ENCODE measurements at regions of chr2 and their contacts with region 1.

Region 1: GRCh38 chr2:218395797-218396687 is 3.6 kb upstream of the CTDSP1 start:
- DNase-seq: peak; percentile 89 to 95 (median 91)
- H3K4me3 ChIP-seq: peak overlapping the region; percentile 54 to 92 (median 85)
- H3K4me3 Mint-ChIP-seq: peak overlapping the region; percentile 88 to 94
- H3K27ac ChIP-seq: peak overlapping the region; percentile 90 to 91
- H3K27ac Mint-ChIP-seq: peak overlapping the region; percentile 97 to 98 (median 97)
- H3K4me1 ChIP-seq: peaks cover 65 to 84% of the 10 kb centered on the region in 2 donors
- H3K4me1 Mint-ChIP-seq: peaks cover 61% of the 10 kb centered on the region
- H3K27me3 ChIP-seq: no peaks in the 10 kb centered on the region
- H3K27me3 Mint-ChIP-seq: peaks cover 0 to 7% (median 0%) of the 10 kb centered on the region in 3 donors
- CTCF ChIP-seq: peak; percentile 89

Region 2: GRCh38 chr2:218216674-218217359 is 179.2 kb before region 1 on chr2 and contains the start of gene ARPC2:
- intact Hi-C with region 1: loop called in 1 of 2 experiments (anchors 5 kb)
- DNase-seq: peak; percentile 94
- H3K4me3 ChIP-seq: peak within 1 kb of the TSS; percentile 78 to 99 (median 99)
- H3K4me3 Mint-ChIP-seq: peak within 1 kb of the TSS; percentile 91 to 95
- H3K27ac ChIP-seq: peak within 1 kb of the TSS; percentile 88 to 97
- H3K27ac Mint-ChIP-seq: peak within 1 kb of the TSS; percentile 96 to 100 (median 99)
- H3K4me1 ChIP-seq: peaks cover 50 to 60% of the 10 kb centered on the region in 2 donors
- H3K4me1 Mint-ChIP-seq: peaks cover 50% of the 10 kb centered on the region
- H3K27me3 ChIP-seq: no peaks in the 10 kb centered on the region
- H3K27me3 Mint-ChIP-seq: no peaks in the 10 kb centered on the region
- CTCF ChIP-seq: no peak
- polyA plus RNA-seq, gene ARPC2: 640 to 1,227 (median 1,162) TPM

Region 3: DNA sequence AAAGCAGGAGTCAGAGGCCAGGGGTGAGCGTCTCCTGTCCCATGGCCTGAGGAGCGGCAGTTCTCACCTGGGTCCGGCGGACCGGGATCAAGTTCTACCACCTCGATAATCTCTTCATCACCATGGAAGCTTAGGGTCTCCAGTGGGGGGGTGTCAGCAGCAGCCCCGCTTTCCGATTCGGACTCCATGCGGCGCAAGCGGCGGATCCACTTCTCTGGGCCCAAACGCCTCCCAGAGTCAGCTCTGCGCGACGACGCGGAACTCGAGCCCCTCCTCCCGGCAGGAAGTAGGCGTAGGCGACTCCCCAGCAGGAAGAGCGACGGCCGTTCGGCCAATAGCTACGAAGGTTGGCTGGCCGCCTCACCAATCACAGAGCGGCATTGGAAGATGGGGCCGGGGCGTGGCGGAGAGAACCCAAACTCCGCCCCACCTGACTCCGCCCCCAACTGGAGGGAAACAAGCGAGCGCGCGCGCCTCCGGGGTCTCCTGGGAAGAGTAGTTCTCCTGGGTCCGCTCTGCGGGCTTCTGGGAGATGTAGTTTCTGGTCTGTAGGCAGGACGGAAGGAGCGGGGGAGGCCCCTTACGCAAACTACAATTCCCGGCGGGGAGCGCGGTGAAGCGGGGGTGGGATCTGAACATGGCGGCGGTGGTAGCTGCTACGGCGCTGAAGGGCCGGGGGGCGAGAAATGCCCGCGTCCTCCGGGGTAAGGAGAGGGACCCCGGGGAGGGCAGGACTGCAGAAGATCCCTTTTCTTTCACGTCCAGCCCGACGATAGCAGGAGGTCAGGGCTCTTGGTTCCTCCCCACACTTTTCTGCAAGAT is 125.9 kb before region 1 on chr2 and contains the starts of genes AAMP and PNKD:
- intact Hi-C with region 1: loop called (anchors 5 kb)
- DNase-seq: peak; percentile 99 to 100 (median 99)
- H3K4me3 ChIP-seq: peak within 1 kb of the TSS; percentile 82 to 97 (median 95)
- H3K4me3 Mint-ChIP-seq: peak within 1 kb of the TSS; percentile 90 to 96
- H3K27ac ChIP-seq: peak within 1 kb of the TSS; percentile 77 to 84
- H3K27ac Mint-ChIP-seq: peak within 1 kb of the TSS; percentile 84 to 95 (median 93)
- H3K4me1 ChIP-seq: peaks cover 33 to 42% of the 10 kb centered on the region in 2 donors
- H3K4me1 Mint-ChIP-seq: peaks cover 51% of the 10 kb centered on the region
- H3K27me3 ChIP-seq: no peaks in the 10 kb centered on the region
- H3K27me3 Mint-ChIP-seq: peaks cover 0 to 3% (median 0%) of the 10 kb centered on the region in 3 donors
- CTCF ChIP-seq: no peak
- polyA plus RNA-seq, gene AAMP: 90.8 to 108 (median 98.7) TPM
- polyA plus RNA-seq, gene PNKD: 79.8 to 92.0 (median 88.2) TPM

Region 4: GRCh38 chr2:218292048-218293014 is 103.7 kb before region 1 on chr2 and contains the start of gene TMBIM1:
- intact Hi-C with region 1: loop called (anchors 2 to 5 kb)
- DNase-seq: peak; percentile 71 to 84 (median 83)
- H3K4me3 ChIP-seq: peak within 1 kb of the TSS; percentile 70 to 90 (median 83)
- H3K4me3 Mint-ChIP-seq: peak within 1 kb of the TSS; percentile 92 to 97
- H3K27ac ChIP-seq: peak within 1 kb of the TSS; percentile 94 to 96
- H3K27ac Mint-ChIP-seq: peak within 1 kb of the TSS; percentile 96 to 99 (median 98)
- H3K4me1 ChIP-seq: peaks cover 65 to 74% of the 10 kb centered on the region in 2 donors
- H3K4me1 Mint-ChIP-seq: peaks cover 64% of the 10 kb centered on the region
- H3K27me3 ChIP-seq: no peaks in the 10 kb centered on the region
- H3K27me3 Mint-ChIP-seq: peaks cover 0 to 2% (median 0%) of the 10 kb centered on the region in 3 donors
- CTCF ChIP-seq: peak; percentile 98
- polyA plus RNA-seq, gene TMBIM1: 101 to 139 (median 129) TPM

Region 5: GRCh38 chr2:218360447-218360846 is 35.6 kb before region 1 on chr2:
- intact Hi-C with region 1: loop called (anchors 5 kb)
- DNase-seq: peak; percentile 87 to 92 (median 87)
- H3K4me3 ChIP-seq: peak overlapping the region in 1 of 3 experiments; percentile 11
- H3K4me3 Mint-ChIP-seq: peak overlapping the region in 1 of 2 donors; percentile 36
- H3K27ac ChIP-seq: peak overlapping the region; percentile 87 to 99
- H3K27ac Mint-ChIP-seq: peak overlapping the region; percentile 86 to 100 (median 97)
- H3K4me1 ChIP-seq: peaks cover 75 to 82% of the 10 kb centered on the region in 2 donors
- H3K4me1 Mint-ChIP-seq: peaks cover 80% of the 10 kb centered on the region
- H3K27me3 ChIP-seq: no peaks in the 10 kb centered on the region
- H3K27me3 Mint-ChIP-seq: peaks cover 0 to 2% (median 1%) of the 10 kb centered on the region in 3 donors
- CTCF ChIP-seq: no peak

Region 6: DNA sequence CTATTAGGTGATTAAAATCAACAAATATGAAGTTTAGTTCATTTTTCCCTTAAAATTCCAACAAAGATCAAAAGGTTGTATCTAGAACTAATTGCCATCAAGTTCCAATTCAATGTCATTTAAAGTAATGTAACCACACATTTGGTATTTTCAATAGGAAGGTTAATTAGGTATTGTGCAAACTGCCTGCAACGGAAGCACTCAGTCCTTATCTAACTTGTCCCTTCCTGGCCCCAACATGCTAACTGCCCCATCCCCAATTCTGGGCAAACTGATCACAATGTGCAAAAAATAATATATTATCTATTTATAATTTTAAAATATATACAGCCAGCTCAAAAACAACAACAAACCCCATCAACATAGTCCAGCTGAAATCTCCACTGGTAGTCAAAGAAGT is 56.0 kb after region 1 on chr2:
- intact Hi-C with region 1: no loop called
- DNase-seq: no peak
- H3K4me3 ChIP-seq: no peak overlapping the region
- H3K4me3 Mint-ChIP-seq: no peak overlapping the region
- H3K27ac ChIP-seq: no peak overlapping the region
- H3K27ac Mint-ChIP-seq: no peak overlapping the region
- H3K4me1 ChIP-seq: no peaks in the 10 kb centered on the region
- H3K4me1 Mint-ChIP-seq: no peaks in the 10 kb centered on the region
- H3K27me3 ChIP-seq: no peaks in the 10 kb centered on the region
- H3K27me3 Mint-ChIP-seq: no peaks in the 10 kb centered on the region
- CTCF ChIP-seq: no peak

Region 7: DNA sequence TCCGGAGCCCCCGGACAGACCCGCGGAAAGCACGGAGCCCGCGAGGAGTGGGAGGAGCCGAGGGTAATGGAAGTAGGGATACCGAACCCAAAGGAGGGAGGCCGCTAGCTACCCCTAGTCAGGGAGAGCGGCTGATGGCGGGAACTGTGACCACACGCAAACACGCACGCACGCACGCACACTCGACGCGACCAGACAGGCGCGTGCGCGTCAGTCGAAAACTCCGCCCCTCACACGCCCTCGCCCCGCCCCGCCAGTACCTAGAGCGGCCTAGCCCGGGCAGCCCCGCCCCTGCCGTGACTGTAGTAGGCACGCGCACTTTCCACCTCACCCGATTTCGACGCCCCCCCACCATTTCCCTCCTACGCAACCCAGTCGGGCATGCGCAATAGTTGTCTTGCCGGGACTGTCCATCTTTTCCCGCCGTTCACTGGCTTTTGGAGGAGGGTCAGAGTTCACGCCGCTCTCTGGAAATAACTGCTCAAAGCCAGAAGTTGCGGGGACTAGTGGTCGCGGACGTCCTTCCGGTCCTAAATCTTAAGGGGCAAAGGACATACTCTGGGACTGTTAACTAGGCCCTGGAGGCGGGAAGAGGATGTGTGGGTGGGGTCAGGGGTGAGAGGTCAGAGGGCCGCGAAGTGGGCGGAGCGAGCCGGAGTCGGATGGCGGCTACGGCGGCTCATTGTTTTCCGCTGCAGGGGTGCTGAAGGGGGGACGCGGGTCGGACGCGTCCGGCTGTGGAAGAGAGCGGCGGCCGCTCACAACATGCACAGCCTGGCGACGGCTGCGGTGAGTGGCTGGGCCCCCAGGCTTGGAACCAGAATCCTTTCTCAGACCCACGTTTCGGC is 172.4 kb after region 1 on chr2 and contains the starts of genes CNOT9 and USP37:
- intact Hi-C with region 1: loop called (anchors 10 kb)
- DNase-seq: peak; percentile 98 to 99 (median 99)
- H3K4me3 ChIP-seq: peak within 1 kb of the TSS; percentile 77 to 86 (median 77)
- H3K4me3 Mint-ChIP-seq: peak within 1 kb of the TSS; percentile 92 to 97
- H3K27ac ChIP-seq: peak within 1 kb of the TSS; percentile 92 to 96
- H3K27ac Mint-ChIP-seq: peak within 1 kb of the TSS; percentile 99 to 100 (median 99)
- H3K4me1 ChIP-seq: peaks cover 24 to 27% of the 10 kb centered on the region in 2 donors
- H3K4me1 Mint-ChIP-seq: peaks cover 45% of the 10 kb centered on the region
- H3K27me3 ChIP-seq: no peaks in the 10 kb centered on the region
- H3K27me3 Mint-ChIP-seq: no peaks in the 10 kb centered on the region
- CTCF ChIP-seq: no peak
- polyA plus RNA-seq, gene CNOT9: 14.5 to 21.5 (median 18.4) TPM
- polyA plus RNA-seq, gene USP37: 2.7 to 4.9 (median 2.7) TPM

Region 8: DNA sequence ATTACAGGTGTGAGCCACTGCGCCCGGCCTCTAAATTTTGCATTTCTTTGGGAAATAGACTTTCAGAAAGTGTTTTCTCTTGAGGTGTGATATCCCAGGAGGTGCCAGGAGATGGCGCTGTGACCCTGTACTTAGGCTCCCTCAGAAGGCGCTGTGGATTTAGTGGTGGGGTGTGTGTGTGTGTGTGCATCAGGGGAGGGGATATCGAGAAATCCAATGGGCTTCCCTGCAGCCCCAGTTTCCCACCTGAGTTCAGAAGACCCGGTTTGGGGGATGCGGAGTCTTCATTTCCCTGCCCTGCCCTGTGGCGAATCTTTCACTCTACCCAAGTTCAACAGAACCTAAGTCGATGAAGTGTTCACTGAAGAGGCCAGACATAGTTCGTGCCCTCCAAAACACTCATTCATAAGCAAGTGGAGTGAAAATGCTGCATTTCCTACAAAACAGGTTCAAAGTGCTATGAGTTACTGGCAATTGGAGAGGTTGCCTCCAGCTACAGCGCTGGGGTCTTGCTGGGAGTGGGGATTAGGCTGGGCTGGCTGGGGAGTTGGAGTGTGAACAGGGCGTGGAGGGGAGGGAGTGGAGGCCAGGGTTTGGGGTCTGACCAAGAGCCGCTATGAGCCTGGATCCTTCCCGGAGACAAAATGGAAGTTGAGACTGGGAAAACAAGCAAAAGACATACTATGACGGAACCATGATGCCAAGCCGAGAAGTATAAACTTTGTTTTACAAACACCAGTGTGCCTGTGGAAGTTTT is 457.0 kb after region 1 on chr2:
- intact Hi-C with region 1: no loop called
- DNase-seq: peak; percentile 37 to 59 (median 49)
- H3K4me3 ChIP-seq: no peak overlapping the region
- H3K4me3 Mint-ChIP-seq: peak overlapping the region in 1 of 2 donors; percentile 75
- H3K27ac ChIP-seq: no peak overlapping the region
- H3K27ac Mint-ChIP-seq: no peak overlapping the region
- H3K4me1 ChIP-seq: peaks cover 11 to 12% of the 10 kb centered on the region in 2 donors
- H3K4me1 Mint-ChIP-seq: peaks cover 17% of the 10 kb centered on the region
- H3K27me3 ChIP-seq: peaks cover 35 to 52% of the 10 kb centered on the region in 2 donors
- H3K27me3 Mint-ChIP-seq: peaks cover 54 to 78% (median 76%) of the 10 kb centered on the region in 3 donors
- CTCF ChIP-seq: peak; percentile 83

Measured in CD14-positive monocyte (primary cell).